Mammary epithelial cell (primary cell): ENCODE measurements at regions of chr7 and their contacts with region 1.

Region 1: DNA sequence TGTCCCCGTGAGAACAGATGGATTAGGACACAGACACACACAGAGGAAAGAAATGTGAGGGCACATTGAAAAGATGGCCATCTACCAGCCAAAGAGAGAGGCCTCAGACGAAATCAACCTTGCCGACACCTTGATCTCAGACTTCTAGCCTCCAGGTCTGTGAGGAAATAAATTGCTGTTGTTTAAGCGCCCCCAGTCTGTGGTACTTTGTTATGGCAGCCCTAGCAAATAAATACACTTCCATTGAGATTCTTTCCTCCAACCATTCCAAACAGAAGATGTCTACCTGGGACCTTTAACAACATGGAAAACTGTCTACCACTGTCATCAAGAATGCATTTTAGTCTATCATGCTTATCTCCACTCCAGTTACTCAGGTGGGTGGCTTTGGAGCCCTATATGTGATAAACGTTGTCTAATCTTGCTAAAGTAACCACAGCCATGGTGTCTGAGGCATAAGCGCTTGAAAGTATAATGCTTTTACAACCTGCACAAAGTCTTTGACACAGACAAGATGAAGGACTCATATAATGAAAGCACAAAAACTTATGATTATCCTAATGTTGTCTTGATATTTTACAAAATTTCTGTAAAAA is 244.3 kb downstream of the MTERF1 start:
- DNase-seq: peak; percentile 30
- H3K4me3 ChIP-seq: no peak overlapping the region
- H3K27ac ChIP-seq: no peak overlapping the region
- H3K4me1 ChIP-seq: no peaks in the 10 kb centered on the region
- H3K27me3 ChIP-seq: peaks cover 4% of the 10 kb centered on the region
- CTCF ChIP-seq: peak; percentile 62 to 76

Region 2: DNA sequence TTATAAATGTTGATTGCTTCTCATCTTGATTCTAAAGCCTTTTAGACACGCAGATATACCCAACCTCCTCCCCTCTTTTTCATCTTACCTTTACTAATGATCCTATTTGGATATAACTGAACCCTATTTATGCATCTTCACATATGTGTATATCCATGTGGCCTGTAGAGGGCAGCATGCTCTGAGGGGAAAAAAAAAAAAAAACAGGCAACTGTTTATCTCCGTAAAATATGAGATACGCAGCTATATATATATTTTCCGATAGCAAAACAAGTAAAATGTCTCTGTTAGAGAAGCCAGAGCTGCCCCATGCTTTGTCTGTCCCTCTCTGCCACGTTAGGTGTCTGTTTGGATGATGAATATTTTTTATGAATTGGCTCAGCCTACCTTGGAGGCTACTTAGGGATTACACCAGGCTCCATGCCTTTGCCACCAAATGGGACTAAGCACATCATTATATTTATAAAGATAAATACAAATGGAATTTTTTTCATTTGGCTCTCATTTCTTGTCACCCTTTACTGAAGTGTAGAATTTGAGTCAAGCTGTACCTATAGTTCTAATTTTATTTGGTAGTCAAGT is 546.8 kb before region 1 on chr7:
- CTCF ChIA-PET with region 1: no interaction called
- dilution Hi-C with region 1: no loop called
- in situ Hi-C with region 1: loop called (anchors 10 to 25 kb)
- intact Hi-C with region 1: loop called (anchors 1 kb)
- DNase-seq: peak; percentile 21
- H3K4me3 ChIP-seq: peak overlapping the region; percentile 28 to 42 (median 31)
- H3K27ac ChIP-seq: peak overlapping the region; percentile 16
- H3K4me1 ChIP-seq: no peaks in the 10 kb centered on the region
- H3K27me3 ChIP-seq: no peaks in the 10 kb centered on the region
- CTCF ChIP-seq: peak; percentile 67 to 83

Region 3: DNA sequence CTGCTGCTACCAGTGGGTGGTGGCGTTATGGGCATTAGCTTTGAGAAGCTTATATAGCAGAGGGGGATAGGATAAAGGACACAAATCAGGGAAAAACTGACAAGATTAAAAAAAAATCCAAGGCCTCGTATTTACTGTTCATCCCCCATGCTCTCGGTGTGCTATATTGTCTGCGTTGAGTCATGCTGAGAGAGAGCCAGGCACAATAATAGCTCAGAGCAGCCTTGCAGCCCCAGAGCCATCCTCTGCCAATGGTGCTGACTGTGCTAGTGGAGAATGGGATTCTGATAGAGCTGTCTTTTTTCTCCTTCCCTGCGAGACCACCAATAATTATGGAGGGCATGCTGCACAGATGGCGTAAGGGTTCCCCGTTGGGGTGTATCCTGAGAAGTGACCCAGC is 423.6 kb before region 1 on chr7:
- CTCF ChIA-PET with region 1: no interaction called
- dilution Hi-C with region 1: no loop called
- in situ Hi-C with region 1: no loop called
- intact Hi-C with region 1: no loop called
- DNase-seq: no peak
- H3K4me3 ChIP-seq: no peak overlapping the region
- H3K27ac ChIP-seq: no peak overlapping the region
- H3K4me1 ChIP-seq: no peaks in the 10 kb centered on the region
- H3K27me3 ChIP-seq: no peaks in the 10 kb centered on the region
- CTCF ChIP-seq: no peak

Region 4: GRCh38 chr7:91264046-91264923 is 371.9 kb before region 1 on chr7 and contains the start of gene FZD1:
- CTCF ChIA-PET with region 1: no interaction called
- dilution Hi-C with region 1: no loop called
- in situ Hi-C with region 1: no loop called
- intact Hi-C with region 1: loop called (anchors 1 kb)
- DNase-seq: peak; percentile 99
- H3K4me3 ChIP-seq: peak within 1 kb of the TSS; percentile 63 to 79 (median 74)
- H3K27ac ChIP-seq: peak within 1 kb of the TSS; percentile 53
- H3K4me1 ChIP-seq: peaks cover 22% of the 10 kb centered on the region
- H3K27me3 ChIP-seq: no peaks in the 10 kb centered on the region
- CTCF ChIP-seq: no peak
- total RNA-seq, gene FZD1: 3.0 to 17.7 TPM

Region 5: DNA sequence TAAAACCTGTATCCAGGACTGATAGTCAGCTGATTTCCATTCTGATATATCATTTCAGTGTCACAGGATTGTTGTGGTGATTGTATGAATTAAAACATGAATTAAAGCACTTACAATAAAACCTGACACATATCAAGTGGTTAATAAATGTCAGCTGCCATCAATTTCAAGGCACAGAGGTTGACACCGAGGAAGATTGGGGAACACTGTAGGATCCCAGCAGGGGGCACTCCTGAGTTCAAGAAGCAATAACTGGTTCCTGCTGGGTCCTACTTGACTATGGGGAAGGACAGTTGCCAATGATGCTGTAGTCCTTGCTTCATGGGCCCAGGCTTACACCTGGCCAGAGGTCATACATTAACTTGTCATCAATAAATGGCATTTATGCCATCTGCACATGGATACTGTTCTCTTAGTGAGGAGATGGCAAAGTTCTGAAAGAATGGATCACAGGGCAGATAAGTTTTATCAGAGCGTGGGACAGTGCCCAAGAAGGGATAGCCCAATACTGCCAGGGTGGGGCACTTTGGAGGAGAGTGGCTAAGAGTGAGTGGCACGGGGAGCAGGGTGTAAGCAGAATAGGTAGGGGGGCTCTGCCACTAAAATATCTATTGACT is 347.9 kb before region 1 on chr7:
- CTCF ChIA-PET with region 1: no interaction called
- dilution Hi-C with region 1: no loop called
- in situ Hi-C with region 1: loop called (anchors 25 kb)
- intact Hi-C with region 1: loop called (anchors 1 kb)
- DNase-seq: peak; percentile 12
- H3K4me3 ChIP-seq: no peak overlapping the region
- H3K27ac ChIP-seq: no peak overlapping the region
- H3K4me1 ChIP-seq: no peaks in the 10 kb centered on the region
- H3K27me3 ChIP-seq: peaks cover 2% of the 10 kb centered on the region
- CTCF ChIP-seq: peak; percentile 63 to 68

Region 6: GRCh38 chr7:91596287-91596852 is 39.9 kb before region 1 on chr7:
- CTCF ChIA-PET with region 1: no interaction called
- dilution Hi-C with region 1: no loop called
- in situ Hi-C with region 1: no loop called
- intact Hi-C with region 1: no loop called
- DNase-seq: no peak
- H3K4me3 ChIP-seq: no peak overlapping the region
- H3K27ac ChIP-seq: no peak overlapping the region
- H3K4me1 ChIP-seq: no peaks in the 10 kb centered on the region
- H3K27me3 ChIP-seq: peaks cover 1% of the 10 kb centered on the region
- CTCF ChIP-seq: no peak

Region 7: DNA sequence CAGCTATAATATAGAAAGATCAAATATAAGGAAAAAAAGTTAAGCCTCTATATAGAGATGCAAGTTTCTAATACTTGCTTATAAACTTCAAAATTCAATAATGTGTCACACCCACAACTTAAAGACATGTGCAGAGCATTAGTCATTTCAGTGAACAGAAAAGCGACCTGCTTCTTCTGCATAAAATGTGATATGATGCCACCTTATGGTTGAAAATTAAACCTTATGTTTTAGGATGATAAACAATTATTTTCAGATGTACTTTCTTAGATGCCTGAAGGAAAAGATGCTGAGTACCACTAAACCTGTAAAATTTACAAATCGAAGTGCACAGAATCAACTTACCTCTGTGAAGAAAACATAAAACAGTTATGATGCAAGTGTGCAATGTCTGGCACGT is 148.2 kb after region 1 on chr7:
- CTCF ChIA-PET with region 1: no interaction called
- dilution Hi-C with region 1: no loop called
- in situ Hi-C with region 1: no loop called
- intact Hi-C with region 1: loop called (anchors 1 kb)
- DNase-seq: peak; percentile 53
- H3K4me3 ChIP-seq: no peak overlapping the region
- H3K27ac ChIP-seq: no peak overlapping the region
- H3K4me1 ChIP-seq: no peaks in the 10 kb centered on the region
- H3K27me3 ChIP-seq: no peaks in the 10 kb centered on the region
- CTCF ChIP-seq: peak; percentile 32 to 47

Region 8: GRCh38 chr7:91852263-91852741 is 216.1 kb after region 1 on chr7:
- CTCF ChIA-PET with region 1: no interaction called
- dilution Hi-C with region 1: no loop called
- in situ Hi-C with region 1: no loop called
- intact Hi-C with region 1: loop called (anchors 2 kb)
- DNase-seq: peak; percentile 83
- H3K4me3 ChIP-seq: no peak overlapping the region
- H3K27ac ChIP-seq: no peak overlapping the region
- H3K4me1 ChIP-seq: peaks cover 28% of the 10 kb centered on the region
- H3K27me3 ChIP-seq: no peaks in the 10 kb centered on the region
- CTCF ChIP-seq: peak; percentile 61 to 64